Activated CD4-positive, alpha-beta memory T cell treated with anti-CD3 and anti-CD28 coated beads for 36 hours (primary cell): ENCODE measurements at regions of chr10 and their contacts with region 1.

Region 1: GRCh38 chr10:119080521-119081260 is at the start of gene EIF3A:
- DNase-seq: peak; percentile 95
- H3K4me3 Mint-ChIP-seq: peak within 1 kb of the TSS; percentile 92
- H3K27ac Mint-ChIP-seq: peak within 1 kb of the TSS; percentile 96
- H3K4me1 Mint-ChIP-seq: peaks cover 22% of the 10 kb centered on the region
- H3K27me3 Mint-ChIP-seq: no peaks in the 10 kb centered on the region
- total RNA-seq, gene EIF3A: 143 to 148 TPM

Region 2: GRCh38 chr10:119028900-119029612 is 51.6 kb before region 1 on chr10:
- CTCF ChIA-PET with region 1: interaction called, 3 read pairs
- POLR2A ChIA-PET with region 1: no interaction called
- intact Hi-C with region 1: loop called (anchors 1 kb)
- DNase-seq: peak; percentile 84
- H3K4me3 Mint-ChIP-seq: peak overlapping the region; percentile 48
- H3K27ac Mint-ChIP-seq: no peak overlapping the region
- H3K4me1 Mint-ChIP-seq: peaks cover 15% of the 10 kb centered on the region
- H3K27me3 Mint-ChIP-seq: no peaks in the 10 kb centered on the region

Region 3: DNA sequence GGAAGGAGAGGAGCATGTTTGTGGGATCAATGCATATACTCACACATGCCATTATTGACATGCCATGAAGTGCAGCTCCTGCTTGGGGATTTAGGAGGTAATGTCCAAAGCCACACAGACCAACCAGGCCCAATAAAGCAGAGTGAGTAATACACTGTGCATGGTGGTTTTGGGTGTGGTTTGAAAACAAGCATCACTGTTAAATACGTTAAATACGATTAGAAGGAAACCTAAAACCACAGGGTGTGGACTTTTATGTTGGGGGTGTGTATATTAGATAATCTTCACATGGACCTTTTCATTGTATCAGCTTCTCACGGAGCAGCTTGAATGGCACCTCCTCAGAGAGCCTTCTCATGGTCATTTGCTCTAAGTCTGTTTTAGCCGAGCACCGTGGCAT is 10.3 kb after region 1 on chr10:
- CTCF ChIA-PET with region 1: no interaction called
- POLR2A ChIA-PET with region 1: no interaction called
- intact Hi-C with region 1: loop called (anchors 1 kb)
- DNase-seq: peak; percentile 55
- H3K4me3 Mint-ChIP-seq: peak overlapping the region; percentile 25
- H3K27ac Mint-ChIP-seq: peak overlapping the region; percentile 74
- H3K4me1 Mint-ChIP-seq: peaks cover 47% of the 10 kb centered on the region
- H3K27me3 Mint-ChIP-seq: no peaks in the 10 kb centered on the region

Region 4: DNA sequence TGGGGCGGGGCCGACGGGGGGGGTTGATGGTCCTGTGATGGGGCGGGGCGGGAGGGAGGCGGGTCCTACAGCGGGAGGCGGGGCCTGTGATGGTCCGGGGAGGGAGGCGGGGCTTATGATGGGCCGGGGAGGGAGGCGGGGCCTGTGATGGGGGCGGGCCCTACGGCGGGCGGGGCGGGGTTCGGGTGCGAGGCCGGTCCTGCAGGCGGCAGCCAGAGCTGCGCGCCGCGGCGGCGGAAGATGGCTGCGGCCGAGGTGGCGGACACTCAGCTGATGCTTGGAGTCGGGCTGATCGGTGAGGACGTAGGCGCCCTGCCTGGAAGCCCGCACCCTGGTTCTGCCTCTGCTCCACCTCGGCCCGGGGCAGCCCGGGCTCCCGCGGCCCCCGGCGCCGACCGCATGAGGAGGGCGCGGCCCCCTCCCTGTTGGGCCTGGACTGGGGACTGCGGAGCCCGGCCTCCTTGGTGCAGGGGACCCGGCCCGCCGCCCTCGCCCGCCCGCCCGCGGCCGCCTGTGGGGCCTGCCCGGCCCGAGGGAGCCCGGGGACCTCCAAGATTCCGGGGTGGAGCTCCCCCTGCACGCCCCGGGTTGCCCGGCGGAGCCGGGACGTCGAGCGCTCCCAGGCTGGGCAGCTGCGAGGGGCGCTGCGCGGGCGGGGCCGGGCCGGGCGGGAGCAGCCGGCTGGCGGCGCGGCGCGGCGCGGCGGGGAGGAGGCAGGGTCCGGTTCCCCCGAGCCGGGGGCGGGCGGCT is 23.4 kb after region 1 on chr10 and contains the start of gene DENND10:
- CTCF ChIA-PET with region 1: interaction called, 4 read pairs
- POLR2A ChIA-PET with region 1: interaction called, 12 read pairs
- intact Hi-C with region 1: loop called (anchors 1 kb)
- DNase-seq: peak; percentile 87
- H3K4me3 Mint-ChIP-seq: peak within 1 kb of the TSS; percentile 75
- H3K27ac Mint-ChIP-seq: peak within 1 kb of the TSS; percentile 38
- H3K4me1 Mint-ChIP-seq: peaks cover 20% of the 10 kb centered on the region
- H3K27me3 Mint-ChIP-seq: no peaks in the 10 kb centered on the region
- total RNA-seq, gene DENND10: 29.8 to 31.4 TPM

Region 5: DNA sequence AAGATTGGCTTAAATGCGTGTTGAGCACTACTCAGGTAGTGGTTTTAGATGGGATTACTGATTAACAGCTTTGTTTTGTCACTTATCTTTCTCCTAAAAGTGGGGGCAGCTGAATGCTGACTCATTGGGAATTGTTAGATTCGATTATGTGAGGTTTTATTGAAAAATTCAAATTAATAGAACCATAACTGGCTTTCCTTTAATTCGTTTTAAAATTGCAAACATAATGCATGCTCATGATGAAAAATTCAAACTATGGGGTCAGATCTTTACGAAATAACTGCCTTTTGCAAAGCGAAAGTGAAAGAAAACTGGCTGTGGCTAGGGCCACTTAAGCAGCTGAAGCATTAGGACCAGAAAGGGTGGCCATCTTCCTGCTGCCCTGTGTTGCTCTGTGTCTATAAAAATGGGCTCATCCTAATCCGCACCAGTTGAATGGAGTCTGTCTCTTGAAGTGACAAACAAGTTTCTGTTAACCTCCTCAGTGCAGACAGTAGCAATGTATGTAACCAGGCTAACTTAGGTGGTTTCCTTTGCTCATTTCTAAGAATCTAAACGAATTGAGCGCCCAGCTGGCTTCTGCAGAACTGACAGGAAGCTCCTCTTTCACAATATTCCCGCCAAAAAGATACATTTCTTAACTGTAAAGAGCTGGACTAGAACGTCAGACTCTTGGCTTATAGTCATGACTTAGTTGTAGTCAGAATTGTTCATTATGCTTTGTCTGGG is 51.0 kb after region 1 on chr10:
- CTCF ChIA-PET with region 1: interaction called, 3 read pairs
- POLR2A ChIA-PET with region 1: interaction called, 10 read pairs
- intact Hi-C with region 1: loop called (anchors 1 kb)
- DNase-seq: peak; percentile 76
- H3K4me3 Mint-ChIP-seq: peak overlapping the region; percentile 80
- H3K27ac Mint-ChIP-seq: peak overlapping the region; percentile 100
- H3K4me1 Mint-ChIP-seq: peaks cover 60% of the 10 kb centered on the region
- H3K27me3 Mint-ChIP-seq: no peaks in the 10 kb centered on the region

Region 6: GRCh38 chr10:119178372-119179119 is 97.9 kb after region 1 on chr10 and contains the start of gene PRDX3:
- CTCF ChIA-PET with region 1: no interaction called
- POLR2A ChIA-PET with region 1: no interaction called
- intact Hi-C with region 1: loop called (anchors 1 kb)
- DNase-seq: peak; percentile 96
- H3K4me3 Mint-ChIP-seq: peak within 1 kb of the TSS; percentile 88
- H3K27ac Mint-ChIP-seq: peak within 1 kb of the TSS; percentile 94
- H3K4me1 Mint-ChIP-seq: peaks cover 35% of the 10 kb centered on the region
- H3K27me3 Mint-ChIP-seq: no peaks in the 10 kb centered on the region
- total RNA-seq, gene PRDX3: 173 to 182 TPM

Region 7: GRCh38 chr10:119596537-119597404 is 516.1 kb after region 1 on chr10 and contains the start of gene TIAL1:
- CTCF ChIA-PET with region 1: no interaction called
- POLR2A ChIA-PET with region 1: no interaction called
- intact Hi-C with region 1: loop called (anchors 10 kb)
- DNase-seq: peak; percentile 97
- H3K4me3 Mint-ChIP-seq: peak within 1 kb of the TSS; percentile 89
- H3K27ac Mint-ChIP-seq: peak within 1 kb of the TSS; percentile 97
- H3K4me1 Mint-ChIP-seq: peaks cover 42% of the 10 kb centered on the region
- H3K27me3 Mint-ChIP-seq: no peaks in the 10 kb centered on the region
- total RNA-seq, gene TIAL1: 177 TPM